Activated T-helper 2 cell treated with anti-CD3 and anti-CD28 coated beads, Interferon-gamma antibody, Interleukin-2, Interleukin-4, amounts not matched to agents 10 μg/mL and 5 μg/mL and 100 μg/mL, durations not matched to agents 14 hours and 24 hours and 36 hours (primary cell): ENCODE measurements at regions of chr1 and their contacts with region 1.

Region 1: DNA sequence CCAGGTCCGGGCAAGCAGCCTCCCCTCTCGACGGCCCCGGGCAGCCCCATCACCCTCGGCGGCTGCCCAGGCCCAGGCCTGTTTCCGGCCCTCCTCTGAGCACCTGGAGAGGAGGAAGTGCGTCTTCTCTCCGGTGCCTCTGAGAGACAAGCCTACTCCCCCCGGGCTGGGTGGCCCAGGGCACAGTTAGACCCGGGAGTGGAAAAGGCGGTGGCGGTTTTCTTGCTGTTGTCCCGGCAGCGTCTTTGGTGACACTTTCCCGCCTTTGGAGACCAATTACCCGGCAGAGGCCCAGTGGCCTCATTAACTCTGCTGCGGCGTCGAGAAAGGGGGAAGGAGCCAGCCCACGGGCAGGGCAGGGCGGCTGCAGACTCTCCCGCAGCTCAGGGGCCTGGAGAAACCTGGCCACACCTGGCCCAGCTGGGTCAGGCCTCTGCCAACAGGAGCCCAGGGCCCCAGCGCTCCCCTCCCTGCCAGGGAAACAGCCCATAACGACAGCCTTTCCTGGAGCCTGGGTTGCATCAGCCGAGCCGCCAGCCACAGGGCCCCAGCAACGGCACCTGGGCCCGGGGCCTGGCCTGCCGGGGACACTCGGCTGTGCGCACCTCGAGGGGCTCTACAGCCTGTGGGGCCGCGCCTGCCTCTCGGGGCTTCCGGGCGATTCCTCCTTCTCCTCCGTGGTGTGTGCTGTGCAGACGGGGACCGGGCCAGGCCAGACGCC is 28.4 kb upstream of the C1orf159 start:
- DNase-seq: peak; percentile 61
- H3K4me3 Mint-ChIP-seq: no peak overlapping the region
- H3K27ac Mint-ChIP-seq: peak overlapping the region; percentile 96
- H3K4me1 Mint-ChIP-seq: peaks cover 12% of the 10 kb centered on the region
- H3K27me3 Mint-ChIP-seq: no peaks in the 10 kb centered on the region

Region 2: GRCh38 chr1:1206376-1207260 is 62.3 kb after region 1 on chr1 and contains the start of gene TNFRSF18:
- intact Hi-C with region 1: loop called (anchors 5 kb)
- DNase-seq: no peak
- H3K4me3 Mint-ChIP-seq: peak within 1 kb of the TSS; percentile 82
- H3K27ac Mint-ChIP-seq: peak within 1 kb of the TSS; percentile 68
- H3K4me1 Mint-ChIP-seq: peaks cover 19% of the 10 kb centered on the region
- H3K27me3 Mint-ChIP-seq: no peaks in the 10 kb centered on the region
- total RNA-seq, gene TNFRSF18: 219 and 231 TPM in 2 replicates